Dorsolateral prefrontal cortex (tissue), 120 donors: ENCODE measurements at regions of chr6 and their contacts with region 1.

Region 1: GRCh38 chr6:117317261-117317660 is 51.9 kb downstream of the VGLL2 start:
- DNase-seq: no peak
- H3K4me3 ChIP-seq: no peak overlapping the region
- H3K27ac ChIP-seq: no peak overlapping the region
- H3K27me3 ChIP-seq: no peaks in the 10 kb centered on the region
- CTCF ChIP-seq: peak in 47 of 56 donors; percentile 17 to 60 (median 33)

Region 2: GRCh38 chr6:116969211-116969863 is 347.9 kb before region 1 on chr6:
- intact Hi-C with region 1: loop called (anchors 5 to 10 kb)
- DNase-seq: peak in 1 of 10 donors; percentile 4
- H3K4me3 ChIP-seq: no peak overlapping the region
- H3K27ac ChIP-seq: no peak overlapping the region
- H3K27me3 ChIP-seq: peaks cover 0 to 36% (median 7%) of the 10 kb centered on the region in 45 donors
- CTCF ChIP-seq: peak in 55 of 56 donors; percentile 45 to 79 (median 70)